ENCODE measurements at regions of chr2 and their contacts with region 1.

Region 1: DNA sequence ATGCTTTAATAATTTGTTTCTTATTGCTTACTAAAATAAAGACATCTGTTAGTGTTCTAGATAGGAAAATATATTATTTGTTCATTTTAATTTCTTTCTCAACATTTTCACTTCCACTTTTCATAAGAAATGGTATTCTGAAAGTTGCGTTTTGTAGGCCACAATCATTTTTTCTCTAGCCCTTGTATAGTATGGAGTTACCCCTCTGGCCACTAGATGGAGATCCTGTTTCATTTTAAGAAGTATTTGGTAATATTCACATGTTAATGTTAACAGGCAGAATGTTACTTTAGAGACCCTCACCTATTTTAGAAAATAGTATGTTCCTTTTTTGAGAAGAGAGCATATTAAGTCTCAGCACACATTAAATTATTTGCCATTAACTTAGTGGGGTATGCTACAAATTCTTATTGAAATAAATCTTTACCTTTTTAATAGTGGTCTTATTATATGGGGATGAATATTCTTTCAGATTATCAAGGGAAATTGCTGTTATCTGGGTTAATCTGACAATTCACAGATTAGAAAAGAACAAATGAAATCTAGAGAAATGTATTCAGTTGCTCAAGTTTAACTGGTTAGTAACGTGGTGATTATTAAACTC is 73.9 kb upstream of the TTC27 start:
- DNase-seq: peak; percentile 63
- H3K4me3 ChIP-seq: no peak overlapping the region
- H3K27ac ChIP-seq: no peak overlapping the region
- H3K4me1 ChIP-seq: peaks cover 7% of the 10 kb centered on the region
- H3K27me3 ChIP-seq: no peaks in the 10 kb centered on the region
- CTCF ChIP-seq: peak; percentile 50
- POLR2A ChIP-seq: no peak

Region 2: DNA sequence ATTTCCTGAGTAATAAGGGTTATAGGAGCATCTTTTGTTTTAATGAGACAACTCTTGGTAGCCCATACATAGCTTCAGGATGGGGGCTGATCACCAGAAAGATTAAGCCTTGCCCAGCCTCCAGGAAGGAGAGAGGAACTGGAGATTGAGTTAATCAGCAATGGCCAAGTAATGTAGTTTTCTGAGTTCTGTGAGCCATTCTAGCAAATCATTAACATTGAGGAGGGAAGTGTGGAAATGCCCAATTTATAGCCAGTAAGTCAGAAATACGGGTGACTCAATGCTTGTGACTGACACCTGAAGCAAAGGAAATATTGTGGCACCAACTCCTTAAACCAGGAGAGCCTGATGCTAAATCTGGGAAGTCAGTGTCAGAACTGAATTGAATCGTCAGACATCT is 768.1 kb before region 1 on chr2:
- CTCF ChIA-PET with region 1: no interaction called
- POLR2A ChIA-PET with region 1: no interaction called
- dilution Hi-C with region 1: no loop called
- intact Hi-C with region 1: no loop called
- DNase-seq: no peak
- H3K4me3 ChIP-seq: no peak overlapping the region
- H3K27ac ChIP-seq: no peak overlapping the region
- H3K4me1 ChIP-seq: no peaks in the 10 kb centered on the region
- H3K27me3 ChIP-seq: no peaks in the 10 kb centered on the region
- CTCF ChIP-seq: no peak
- POLR2A ChIP-seq: no peak

Region 3: GRCh38 chr2:32425719-32426141 is 128.2 kb before region 1 on chr2:
- CTCF ChIA-PET with region 1: no interaction called
- POLR2A ChIA-PET with region 1: no interaction called
- dilution Hi-C with region 1: no loop called
- intact Hi-C with region 1: no loop called
- DNase-seq: no peak
- H3K4me3 ChIP-seq: no peak overlapping the region
- H3K27ac ChIP-seq: no peak overlapping the region
- H3K4me1 ChIP-seq: no peaks in the 10 kb centered on the region
- H3K27me3 ChIP-seq: no peaks in the 10 kb centered on the region
- CTCF ChIP-seq: no peak
- POLR2A ChIP-seq: no peak

Region 4: DNA sequence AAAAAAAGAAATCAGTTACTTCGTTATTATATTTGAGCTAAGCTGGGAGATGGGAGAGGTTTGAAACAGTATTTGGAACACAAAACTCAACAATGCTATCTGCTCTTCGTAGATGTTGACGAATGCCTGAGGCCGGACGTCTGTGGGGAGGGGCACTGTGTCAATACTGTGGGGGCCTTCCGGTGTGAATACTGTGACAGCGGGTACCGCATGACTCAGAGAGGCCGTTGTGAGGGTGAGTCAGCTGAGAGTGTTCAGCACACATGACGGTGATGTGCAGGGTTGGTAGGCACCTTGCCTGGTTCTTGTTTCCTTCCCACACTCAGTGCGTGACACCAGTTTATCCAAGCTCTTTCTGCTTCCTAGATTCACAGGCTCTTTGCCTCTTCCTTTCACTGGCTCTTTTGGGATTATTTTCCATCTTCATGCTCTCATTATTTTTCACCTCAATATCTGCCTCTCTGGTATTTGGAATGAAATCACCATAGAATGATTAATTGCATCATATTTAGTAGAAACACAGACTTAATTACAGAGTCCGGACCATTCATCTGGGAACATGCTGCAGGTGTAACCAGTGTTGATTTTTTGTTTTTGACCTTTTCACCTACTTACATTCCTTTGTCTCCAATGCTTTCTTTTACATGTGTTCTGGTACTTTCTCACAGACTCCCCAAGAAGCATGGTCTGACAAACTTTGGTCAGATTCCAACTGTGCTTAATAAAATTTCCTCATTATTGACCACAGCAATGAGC is 721.9 kb after region 1 on chr2:
- CTCF ChIA-PET with region 1: no interaction called
- POLR2A ChIA-PET with region 1: no interaction called
- dilution Hi-C with region 1: no loop called
- intact Hi-C with region 1: loop called (anchors 10 kb)
- DNase-seq: peak; percentile 80
- H3K4me3 ChIP-seq: no peak overlapping the region
- H3K27ac ChIP-seq: peak overlapping the region; percentile 84
- H3K4me1 ChIP-seq: peaks cover 6% of the 10 kb centered on the region
- H3K27me3 ChIP-seq: no peaks in the 10 kb centered on the region
- CTCF ChIP-seq: no peak
- POLR2A ChIP-seq: no peak